ENCODE measurements at regions of chr7 and their contacts with region 1.

Region 1: DNA sequence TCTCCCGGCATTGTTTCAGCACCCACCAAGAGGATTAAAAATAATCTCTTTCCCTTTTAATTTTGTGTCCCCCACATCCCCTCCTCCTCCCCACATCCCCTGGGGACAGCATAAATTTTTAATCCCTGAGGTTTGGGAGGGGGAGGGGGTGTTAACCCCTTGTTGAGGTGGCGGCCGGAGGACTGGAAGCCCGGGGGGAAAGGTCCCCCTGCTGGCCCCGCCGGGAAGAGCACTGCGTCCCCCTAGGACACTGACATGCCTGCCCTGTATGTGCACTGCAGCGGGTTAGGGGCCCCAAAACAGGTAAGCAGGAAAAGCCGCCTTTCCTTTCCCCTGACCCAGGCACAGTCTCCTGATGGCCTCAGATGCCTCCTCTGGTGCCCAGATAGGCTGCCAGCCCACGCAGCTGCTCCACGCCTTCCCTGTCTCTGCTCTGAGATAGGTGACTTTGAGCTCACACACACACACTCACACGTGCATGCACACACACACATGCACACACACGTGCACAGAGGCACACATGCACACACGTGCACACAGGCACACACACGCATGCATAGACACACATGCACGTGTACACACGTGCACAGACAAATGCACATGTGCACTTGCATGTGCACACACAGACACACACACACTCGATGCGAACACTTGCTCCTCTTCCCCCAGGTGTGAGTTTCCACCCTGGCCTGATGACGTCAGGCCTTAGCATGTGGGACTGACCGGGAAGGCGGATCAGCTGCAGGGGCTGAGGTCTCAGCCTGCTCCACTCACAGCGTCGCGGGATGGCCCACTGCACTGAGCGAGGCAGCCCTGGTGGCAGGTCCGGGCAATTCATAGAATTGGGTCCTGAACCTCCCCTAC is 12.3 kb downstream of the CNPY1 start:
- DNase-seq: no peak
- H3K4me3 ChIP-seq: no peak overlapping the region
- H3K27ac ChIP-seq: no peak overlapping the region
- H3K4me1 ChIP-seq: peaks cover 3% of the 10 kb centered on the region
- H3K27me3 ChIP-seq: peaks cover 41% of the 10 kb centered on the region
- CTCF ChIP-seq: peak; percentile 21 to 54

Region 2: DNA sequence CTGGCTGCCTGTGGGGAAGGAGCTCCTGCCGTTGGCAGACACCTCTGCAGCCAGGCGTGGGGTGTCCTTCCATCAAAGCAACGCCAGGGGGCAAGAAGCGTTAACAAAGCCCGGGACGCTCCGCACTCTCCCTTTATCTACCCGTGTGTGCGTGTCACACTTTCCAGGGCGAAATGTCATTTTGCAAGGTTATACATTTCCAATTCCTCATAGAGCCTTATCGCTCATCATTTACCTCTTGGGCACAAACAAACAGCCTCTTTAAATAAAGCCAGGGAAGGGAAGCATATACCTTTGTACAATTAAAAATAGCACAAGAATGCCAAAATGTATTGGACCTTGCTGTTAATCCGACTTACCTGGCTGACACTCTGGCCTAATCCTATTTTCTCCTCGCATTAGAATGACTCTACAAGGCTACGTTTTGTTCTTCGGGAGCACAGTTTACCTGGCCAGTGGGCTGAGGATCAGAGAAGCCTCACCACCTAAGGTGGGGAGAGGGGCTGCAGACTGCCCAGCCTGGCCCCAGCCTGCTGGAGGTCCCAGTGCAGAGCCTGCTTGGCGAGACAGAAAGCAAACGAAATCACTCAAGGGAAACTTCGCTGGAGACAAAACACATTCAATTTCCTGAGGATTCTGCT is 153.7 kb before region 1 on chr7:
- CTCF ChIA-PET with region 1: no interaction called
- dilution Hi-C with region 1: no loop called
- in situ Hi-C with region 1: no loop called
- intact Hi-C with region 1: loop called (anchors 10 kb)
- DNase-seq: peak; percentile 59
- H3K4me3 ChIP-seq: no peak overlapping the region
- H3K27ac ChIP-seq: no peak overlapping the region
- H3K4me1 ChIP-seq: peaks cover 18% of the 10 kb centered on the region
- H3K27me3 ChIP-seq: peaks cover 72% of the 10 kb centered on the region
- CTCF ChIP-seq: peak; percentile 85 to 93

Region 3: GRCh38 chr7:155506854-155507337 is 27.2 kb before region 1 on chr7:
- CTCF ChIA-PET with region 1: no interaction called
- dilution Hi-C with region 1: loop called (anchors 5 kb)
- in situ Hi-C with region 1: no loop called
- intact Hi-C with region 1: no loop called
- DNase-seq: peak; percentile 32
- H3K4me3 ChIP-seq: no peak overlapping the region
- H3K27ac ChIP-seq: no peak overlapping the region
- H3K4me1 ChIP-seq: no peaks in the 10 kb centered on the region
- H3K27me3 ChIP-seq: peaks cover 38% of the 10 kb centered on the region
- CTCF ChIP-seq: no peak